Ovary (tissue), 10 donors: ENCODE measurements at regions of chr9 and their contacts with region 1.

Region 1: GRCh38 chr9:2179567-2179966 is 164.4 kb downstream of the SMARCA2 start:
- DNase-seq: no peak
- H3K4me3 ChIP-seq: no peak overlapping the region
- H3K27ac ChIP-seq: no peak overlapping the region
- H3K4me1 ChIP-seq: no peaks in the 10 kb centered on the region
- H3K27me3 ChIP-seq: no peaks in the 10 kb centered on the region
- CTCF ChIP-seq: no peak
- EP300 ChIP-seq: no peak
- POLR2A ChIP-seq: no peak

Region 2: DNA sequence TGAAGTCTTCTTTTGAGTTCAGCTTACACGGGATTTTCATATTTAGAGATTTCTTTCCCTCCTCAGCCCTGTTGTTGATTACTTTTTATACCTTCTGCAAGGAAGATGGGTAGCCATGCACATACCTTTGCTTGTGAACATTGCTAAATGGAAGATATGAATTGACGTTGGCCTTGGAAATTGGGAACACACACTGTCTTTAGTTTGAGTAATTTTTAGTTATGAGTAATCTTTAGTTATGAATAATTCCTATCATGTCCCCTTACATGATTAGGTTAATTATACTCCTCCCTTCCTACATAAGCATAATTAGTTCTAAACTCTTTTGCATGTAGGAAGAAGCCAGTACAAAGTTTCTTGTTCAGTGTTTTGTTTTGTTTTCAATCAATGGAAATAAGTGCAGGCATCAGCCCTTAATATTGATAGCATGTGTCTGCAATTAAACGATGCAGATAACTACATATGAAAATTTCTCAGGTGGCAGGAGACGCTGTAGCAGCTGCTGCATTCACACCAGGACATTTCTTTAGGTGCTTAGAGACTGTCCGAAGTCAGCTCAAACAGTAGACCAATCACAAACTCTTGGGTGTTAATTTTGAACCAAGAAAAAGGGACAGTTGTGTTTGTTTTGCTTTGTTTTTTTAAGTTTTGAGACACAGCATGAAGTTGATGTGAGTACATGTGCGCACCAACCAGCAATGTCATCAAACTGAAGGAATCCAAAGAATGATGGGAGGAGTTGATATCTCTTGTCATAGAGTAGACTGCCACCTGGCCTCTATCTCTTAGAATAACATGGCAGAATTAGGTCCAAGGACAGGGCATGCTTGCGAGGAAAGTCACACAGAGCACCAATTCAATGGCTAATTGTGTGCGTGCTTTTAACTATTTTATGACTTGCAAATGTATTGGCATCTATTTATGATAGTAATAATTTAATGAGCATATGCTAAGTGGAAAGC is 113.0 kb before region 1 on chr9:
- intact Hi-C with region 1: no loop called
- DNase-seq: no peak
- H3K4me3 ChIP-seq: no peak overlapping the region
- H3K27ac ChIP-seq: no peak overlapping the region
- H3K4me1 ChIP-seq: no peaks in the 10 kb centered on the region
- H3K27me3 ChIP-seq: no peaks in the 10 kb centered on the region
- CTCF ChIP-seq: no peak
- EP300 ChIP-seq: no peak
- POLR2A ChIP-seq: no peak

Region 3: GRCh38 chr9:2228132-2228531 is 48.6 kb after region 1 on chr9:
- intact Hi-C with region 1: loop called in 1 of 4 experiments (anchors 10 kb)
- DNase-seq: peak in 2 of 5 donors; percentile 32 to 39
- H3K4me3 ChIP-seq: no peak overlapping the region
- H3K27ac ChIP-seq: peak overlapping the region; percentile 9 to 72
- H3K4me1 ChIP-seq: peaks cover 12% of the 10 kb centered on the region
- H3K27me3 ChIP-seq: no peaks in the 10 kb centered on the region
- CTCF ChIP-seq: no peak
- EP300 ChIP-seq: no peak
- POLR2A ChIP-seq: no peak

Region 4: GRCh38 chr9:2241836-2242741 is 62.5 kb after region 1 on chr9:
- intact Hi-C with region 1: no loop called
- DNase-seq: peak; percentile 82 to 92 (median 89)
- H3K4me3 ChIP-seq: peak overlapping the region; percentile 47
- H3K27ac ChIP-seq: peak overlapping the region; percentile 11 to 78
- H3K4me1 ChIP-seq: peaks cover 6% of the 10 kb centered on the region
- H3K27me3 ChIP-seq: no peaks in the 10 kb centered on the region
- CTCF ChIP-seq: peak in 1 of 3 donors; percentile 35
- EP300 ChIP-seq: no peak
- POLR2A ChIP-seq: peak; percentile 73